BJ (cell line): ENCODE measurements at regions of chr7 and their contacts with region 1.

Region 1: GRCh38 chr7:101165075-101165957 is at the start of gene VGF:
- DNase-seq: peak; percentile 33
- H3K4me3 ChIP-seq: no peak within 1 kb of the TSS
- H3K27me3 ChIP-seq: peaks cover 22% of the 10 kb centered on the region
- CTCF ChIP-seq: no peak
- polyA plus RNA-seq, gene VGF: 0.04 TPM in 1 of 2 replicates, not detected in the other

Region 2: GRCh38 chr7:100983451-100984187 is 181.7 kb before region 1 on chr7:
- CTCF ChIA-PET with region 1: no interaction called
- POLR2A ChIA-PET with region 1: no interaction called
- DNase-seq: peak; percentile 71
- H3K4me3 ChIP-seq: no peak overlapping the region
- H3K27me3 ChIP-seq: peaks cover 2% of the 10 kb centered on the region; the same call in 1 of the 2 replicates
- CTCF ChIP-seq: no peak

Region 3: GRCh38 chr7:101132646-101133600 is 32.4 kb before region 1 on chr7:
- CTCF ChIA-PET with region 1: interaction called, 3 read pairs
- POLR2A ChIA-PET with region 1: interaction called, 24 read pairs
- DNase-seq: no peak
- H3K4me3 ChIP-seq: no peak overlapping the region
- H3K27me3 ChIP-seq: no peaks in the 10 kb centered on the region
- CTCF ChIP-seq: no peak